Cardiac septum (tissue), 1 donor: ENCODE measurements at regions of chr2 and their contacts with region 1.

Region 1: DNA sequence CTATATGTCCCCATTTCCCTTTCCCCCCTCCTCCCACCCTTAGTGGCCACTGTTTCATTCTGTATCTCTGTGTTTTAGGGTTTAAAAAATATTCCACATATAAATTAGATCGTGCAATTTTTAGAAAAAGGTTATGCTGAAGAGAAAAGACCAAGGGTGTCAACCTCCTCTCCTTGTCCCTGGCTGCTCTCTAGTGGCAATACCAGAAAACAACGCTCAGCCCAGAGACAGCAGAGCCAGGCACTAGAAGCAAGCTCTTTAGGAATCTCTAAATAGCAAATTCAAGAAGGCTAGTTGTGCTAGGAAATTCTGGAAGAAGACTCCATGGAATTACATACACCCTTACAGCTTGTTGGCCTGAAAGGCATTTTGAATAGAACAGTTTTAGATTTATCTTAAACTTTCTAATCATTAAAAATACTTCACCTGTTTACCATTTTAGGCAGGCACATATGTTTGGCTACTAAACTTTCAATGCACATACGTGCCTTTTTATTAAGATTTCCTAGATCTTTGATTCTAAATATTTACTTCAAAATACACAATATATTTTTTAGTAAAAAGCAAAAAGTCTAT is 35.1 kb upstream of the RASGRP3 start:
- DNase-seq: no peak

Region 2: DNA sequence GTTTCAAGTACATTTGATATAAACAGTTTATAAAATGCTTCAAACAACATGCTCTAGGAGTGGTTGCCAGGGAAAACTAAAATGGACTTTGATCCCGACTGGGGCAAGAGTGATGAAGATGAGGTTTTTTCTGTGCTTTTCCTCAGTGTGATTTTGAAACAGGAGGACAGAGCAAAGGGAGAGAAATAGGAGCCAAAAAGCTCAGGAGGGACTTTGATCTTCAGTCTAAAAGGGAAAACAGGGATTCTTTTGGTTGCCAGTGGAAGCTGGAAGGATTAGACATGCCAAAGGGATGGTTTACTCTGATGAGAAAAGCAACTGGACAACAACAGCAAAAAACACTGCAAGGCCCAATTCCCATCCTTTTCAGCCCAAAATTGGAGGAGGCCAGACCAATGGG is 399.1 kb before region 1 on chr2:
- intact Hi-C with region 1: loop called (anchors 5 kb)
- DNase-seq: no peak

Region 3: GRCh38 chr2:33342171-33342570 is 99.2 kb before region 1 on chr2:
- intact Hi-C with region 1: no loop called
- DNase-seq: no peak

Region 4: GRCh38 chr2:33412920-33413319 is 28.4 kb before region 1 on chr2:
- intact Hi-C with region 1: loop called (anchors 1 kb)
- DNase-seq: no peak

Region 5: GRCh38 chr2:34031097-34031496 is 589.8 kb after region 1 on chr2:
- intact Hi-C with region 1: no loop called
- DNase-seq: no peak